ENCODE measurements at regions of chr3 and their contacts with region 1.

Region 1: GRCh38 chr3:49500732-49501609 is 30.9 kb downstream of the DAG1 start:
- DNase-seq: peak; percentile 87
- H3K4me3 ChIP-seq: peak overlapping the region; percentile 13; the same call in 1 of the 2 replicates
- H3K27ac ChIP-seq: peak overlapping the region; percentile 87
- H3K27me3 ChIP-seq: no peaks in the 10 kb centered on the region
- CTCF ChIP-seq: no peak

Region 2: DNA sequence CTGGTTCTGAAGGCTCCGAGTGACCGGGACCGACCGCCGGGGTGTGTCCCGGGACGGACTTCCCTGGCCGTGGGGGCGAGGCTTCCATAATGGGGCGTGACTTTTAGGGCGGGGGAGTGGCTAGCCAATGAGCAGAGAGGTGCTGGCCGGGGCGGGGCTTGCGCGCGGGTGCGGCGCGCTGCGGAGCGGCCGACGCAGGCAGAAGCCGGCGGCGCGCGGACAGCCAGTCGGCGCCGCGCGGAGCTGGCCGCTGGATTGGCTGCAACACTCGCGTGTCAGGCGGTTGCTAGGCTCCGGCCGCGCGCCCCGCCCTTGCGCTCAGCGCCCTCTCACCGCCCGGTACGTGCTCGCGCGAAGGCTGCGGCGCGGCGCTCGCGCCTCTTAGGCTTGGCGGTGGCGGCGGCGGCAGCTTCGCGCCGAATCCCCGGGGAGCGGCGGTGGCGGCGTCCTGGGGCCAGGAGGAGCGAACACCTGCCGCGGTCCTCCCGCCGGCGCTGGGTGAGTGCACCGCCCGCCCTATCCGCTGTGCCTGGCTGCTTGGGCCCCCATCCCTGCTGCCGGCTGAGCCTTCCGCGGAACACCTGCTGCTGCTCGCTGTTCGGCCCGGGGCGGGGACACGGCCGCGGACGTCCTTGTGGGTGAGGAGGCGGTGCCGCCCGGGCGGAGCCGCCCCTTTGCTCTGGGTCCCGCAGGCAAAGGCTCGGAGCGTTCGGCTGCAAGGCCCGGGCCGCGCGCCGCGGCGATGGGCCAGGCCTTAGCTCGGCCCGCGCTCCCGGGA is 30.8 kb before region 1 on chr3 and contains the start of gene DAG1:
- CTCF ChIA-PET with region 1: no interaction called
- POLR2A ChIA-PET with region 1: interaction called, 10 read pairs
- DNase-seq: peak; percentile 81
- H3K4me3 ChIP-seq: peak within 1 kb of the TSS; percentile 82
- H3K27ac ChIP-seq: peak within 1 kb of the TSS; percentile 91
- H3K27me3 ChIP-seq: no peaks in the 10 kb centered on the region
- CTCF ChIP-seq: no peak
- polyA plus RNA-seq, gene DAG1: 29.5 and 34.2 TPM in 2 replicates